ENCODE measurements at regions of chr10 and their contacts with region 1.

Region 1: GRCh38 chr10:92592761-92593618 is at the start of gene KIF11:
- DNase-seq: peak; percentile 93
- ATAC-seq: peak; percentile 76
- H3K4me3 ChIP-seq: peak within 1 kb of the TSS; percentile 90
- H3K27ac ChIP-seq: peak within 1 kb of the TSS; percentile 95
- H3K4me1 ChIP-seq: peaks cover 25% of the 10 kb centered on the region
- H3K27me3 ChIP-seq: no peaks in the 10 kb centered on the region
- CTCF ChIP-seq: no peak
- total RNA-seq, gene KIF11: 25.5 and 26.2 TPM in 2 replicates

Region 2: DNA sequence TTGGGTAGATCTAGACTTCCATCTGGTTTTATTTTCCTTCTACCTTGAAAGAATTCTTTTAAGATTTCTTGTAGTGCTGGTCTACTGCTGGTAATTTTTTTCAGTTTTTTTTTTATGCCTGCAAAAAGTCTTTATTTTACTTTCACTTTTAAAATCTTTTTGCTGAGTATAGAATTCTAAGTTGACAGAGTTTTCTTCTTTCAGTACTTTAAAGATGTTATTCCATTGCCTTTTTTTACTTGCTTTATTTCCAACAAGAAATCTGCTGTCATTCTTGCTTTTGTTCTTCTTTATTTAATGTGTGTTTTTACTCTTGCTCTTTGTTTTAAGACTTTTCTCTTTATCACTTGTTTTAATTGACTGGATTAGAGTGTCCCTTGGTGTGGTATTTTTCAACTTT is 1218.9 kb before region 1 on chr10:
- CTCF ChIA-PET with region 1: no interaction called
- POLR2A ChIA-PET with region 1: no interaction called
- intact Hi-C with region 1: no loop called
- DNase-seq: no peak
- ATAC-seq: no peak
- H3K4me3 ChIP-seq: no peak overlapping the region
- H3K27ac ChIP-seq: no peak overlapping the region
- H3K4me1 ChIP-seq: peaks cover 9% of the 10 kb centered on the region; the same call in 1 of the 2 replicates
- H3K27me3 ChIP-seq: no peaks in the 10 kb centered on the region
- CTCF ChIP-seq: no peak

Region 3: DNA sequence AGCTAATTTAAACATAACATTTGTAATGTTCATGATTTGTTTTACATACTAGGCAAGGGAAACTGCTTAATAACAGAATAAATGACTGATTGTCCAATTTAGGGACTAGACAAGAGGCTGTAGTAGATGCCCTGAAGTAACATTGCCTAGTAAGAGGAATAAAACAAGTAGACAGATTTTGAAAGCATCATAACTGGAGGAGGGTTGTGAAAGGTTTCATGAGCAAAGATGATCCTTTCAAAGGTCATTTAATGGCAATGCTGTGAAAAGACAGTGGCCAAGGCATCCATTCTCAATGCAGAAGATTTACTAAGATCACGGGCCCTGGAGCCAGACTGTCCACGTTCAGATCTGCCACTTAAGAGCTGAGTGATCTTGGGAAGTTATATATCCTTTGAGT is 51.9 kb after region 1 on chr10:
- CTCF ChIA-PET with region 1: no interaction called
- POLR2A ChIA-PET with region 1: no interaction called
- intact Hi-C with region 1: loop called (anchors 2 kb)
- DNase-seq: no peak
- ATAC-seq: no peak
- H3K4me3 ChIP-seq: no peak overlapping the region
- H3K27ac ChIP-seq: no peak overlapping the region
- H3K4me1 ChIP-seq: peaks cover 9% of the 10 kb centered on the region
- H3K27me3 ChIP-seq: no peaks in the 10 kb centered on the region
- CTCF ChIP-seq: no peak

Region 4: GRCh38 chr10:92822060-92822634 is 229.2 kb after region 1 on chr10:
- CTCF ChIA-PET with region 1: no interaction called
- POLR2A ChIA-PET with region 1: no interaction called
- intact Hi-C with region 1: loop called (anchors 5 kb)
- DNase-seq: peak; percentile 85
- ATAC-seq: peak; percentile 88
- H3K4me3 ChIP-seq: peak overlapping the region; percentile 41
- H3K27ac ChIP-seq: peak overlapping the region; percentile 92
- H3K4me1 ChIP-seq: peaks cover 17% of the 10 kb centered on the region
- H3K27me3 ChIP-seq: no peaks in the 10 kb centered on the region
- CTCF ChIP-seq: no peak

Measured in PC-3 (cell line).